Left ventricle myocardium inferior (tissue), 1 donor: ENCODE measurements at regions of chr1 and their contacts with region 1.

Region 1: DNA sequence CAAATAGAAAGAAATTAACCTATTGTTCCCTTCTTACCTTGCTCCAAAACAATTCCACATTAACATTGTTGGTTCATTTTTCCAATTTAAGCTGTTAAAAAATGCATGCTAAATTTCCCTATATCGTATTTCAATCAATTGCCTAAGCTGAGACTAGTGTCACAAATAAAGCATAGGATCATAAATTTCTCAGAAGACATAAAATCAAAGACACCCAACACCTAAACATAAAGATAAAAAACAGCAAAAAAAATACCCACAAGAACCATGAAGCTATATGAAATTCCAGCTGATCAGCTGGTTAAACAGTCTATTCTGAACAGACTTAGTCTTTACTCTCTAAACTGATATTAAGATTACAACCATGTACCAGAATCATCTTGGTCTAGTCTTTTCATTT is 32.3 kb downstream of the ACBD6 start:
- DNase-seq: no peak
- H3K4me3 ChIP-seq: no peak overlapping the region
- H3K27ac ChIP-seq: no peak overlapping the region
- H3K4me1 ChIP-seq: no peaks in the 10 kb centered on the region
- H3K27me3 ChIP-seq: no peaks in the 10 kb centered on the region
- CTCF ChIP-seq: no peak

Region 2: DNA sequence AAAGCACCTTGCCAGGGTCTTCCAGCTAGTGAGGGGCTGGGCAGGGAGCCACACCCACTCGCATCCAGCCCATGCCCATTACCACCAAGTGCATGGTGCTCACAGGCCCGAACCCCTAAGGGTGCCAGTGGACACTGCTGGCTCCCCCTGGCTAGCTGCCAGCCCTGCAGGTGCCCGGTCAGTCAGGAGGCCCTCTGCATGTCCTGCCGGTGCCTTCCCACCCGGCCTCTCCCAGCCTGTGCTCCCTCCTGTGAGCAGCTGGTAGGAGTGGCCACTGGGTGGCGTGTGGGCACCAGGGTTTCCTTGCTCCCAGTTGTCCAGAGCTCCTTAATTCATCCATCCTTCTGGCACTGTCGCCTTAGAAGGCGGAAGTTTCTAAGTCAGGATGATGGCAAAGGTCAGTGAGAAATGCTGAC is 281.9 kb before region 1 on chr1:
- intact Hi-C with region 1: loop called (anchors 10 kb)
- DNase-seq: no peak
- H3K4me3 ChIP-seq: no peak overlapping the region
- H3K27ac ChIP-seq: no peak overlapping the region
- H3K4me1 ChIP-seq: peaks cover 5% of the 10 kb centered on the region
- H3K27me3 ChIP-seq: no peaks in the 10 kb centered on the region
- CTCF ChIP-seq: peak; percentile 55

Region 3: DNA sequence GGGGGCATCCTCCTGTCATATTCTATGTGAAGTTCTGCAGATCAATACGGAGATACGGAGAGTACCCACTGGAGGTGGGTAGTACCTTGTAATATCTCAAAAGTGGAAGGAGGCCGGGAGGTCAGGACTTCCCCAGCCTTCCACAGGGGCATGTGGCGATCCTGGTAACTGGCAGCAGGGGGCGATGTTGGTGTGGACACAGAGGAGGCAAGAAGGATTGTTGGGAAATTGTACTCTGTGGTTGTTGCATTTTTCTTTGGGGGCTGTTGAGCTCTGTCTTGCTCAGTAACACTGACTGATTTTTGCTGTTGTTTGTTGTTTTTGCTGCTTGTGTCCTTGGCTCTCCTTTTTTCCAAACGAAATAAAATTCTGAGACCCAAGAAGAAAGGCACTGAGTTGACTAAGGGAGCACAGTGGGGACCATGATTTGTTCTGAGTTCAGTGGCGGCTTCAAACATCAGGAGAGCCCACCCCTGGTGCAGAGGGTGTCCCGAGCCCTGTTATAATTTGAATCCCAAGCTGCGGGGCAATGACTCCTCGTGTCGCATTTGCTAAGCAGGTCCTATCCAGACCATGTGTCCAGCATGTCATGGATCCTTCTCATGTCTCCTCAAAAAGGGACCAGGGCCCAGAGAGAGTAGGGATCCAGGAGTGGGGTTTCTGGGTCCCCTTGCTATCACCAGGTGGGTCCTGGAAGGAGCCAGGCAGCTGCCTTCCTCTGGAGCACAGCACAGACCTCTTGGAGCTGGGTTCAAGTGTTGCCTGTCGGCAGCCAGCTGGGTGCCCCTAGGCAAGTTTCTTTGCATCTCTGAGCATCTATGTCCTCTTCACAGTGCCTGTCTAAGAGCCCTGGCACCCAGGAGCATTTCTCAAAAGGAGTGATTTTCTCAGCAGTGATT is 217.1 kb before region 1 on chr1:
- intact Hi-C with region 1: loop called (anchors 10 kb)
- DNase-seq: peak; percentile 67
- H3K4me3 ChIP-seq: no peak overlapping the region
- H3K27ac ChIP-seq: no peak overlapping the region
- H3K4me1 ChIP-seq: no peaks in the 10 kb centered on the region
- H3K27me3 ChIP-seq: peaks cover 87% of the 10 kb centered on the region
- CTCF ChIP-seq: peak; percentile 82